ENCODE measurements at regions of chr2 and their contacts with region 1.

Region 1: GRCh38 chr2:162221064-162221463 is 22.2 kb downstream of the FAP start:
- DNase-seq: peak; percentile 74
- ATAC-seq: peak; percentile 75
- H3K4me3 Mint-ChIP-seq: no peak overlapping the region
- H3K27ac Mint-ChIP-seq: no peak overlapping the region
- H3K4me1 Mint-ChIP-seq: no peaks in the 10 kb centered on the region
- H3K27me3 Mint-ChIP-seq: peaks cover 47% of the 10 kb centered on the region

Region 2: GRCh38 chr2:162164802-162165201 is 56.3 kb before region 1 on chr2:
- CTCF ChIA-PET with region 1: interaction called, 16 read pairs
- DNase-seq: no peak
- ATAC-seq: no peak
- H3K4me3 Mint-ChIP-seq: no peak overlapping the region
- H3K27ac Mint-ChIP-seq: no peak overlapping the region
- H3K4me1 Mint-ChIP-seq: peaks cover 7% of the 10 kb centered on the region
- H3K27me3 Mint-ChIP-seq: peaks cover 33% of the 10 kb centered on the region

Region 3: GRCh38 chr2:162293122-162293786 is 72.2 kb after region 1 on chr2:
- CTCF ChIA-PET with region 1: interaction called, 125 read pairs
- DNase-seq: no peak
- ATAC-seq: no peak
- H3K4me3 Mint-ChIP-seq: no peak overlapping the region
- H3K27ac Mint-ChIP-seq: no peak overlapping the region
- H3K4me1 Mint-ChIP-seq: peaks cover 4% of the 10 kb centered on the region
- H3K27me3 Mint-ChIP-seq: no peaks in the 10 kb centered on the region

Region 4: GRCh38 chr2:162301151-162301804 is 80.2 kb after region 1 on chr2:
- CTCF ChIA-PET with region 1: interaction called, 125 read pairs
- DNase-seq: peak; percentile 63
- ATAC-seq: peak; percentile 81
- H3K4me3 Mint-ChIP-seq: no peak overlapping the region
- H3K27ac Mint-ChIP-seq: no peak overlapping the region
- H3K4me1 Mint-ChIP-seq: peaks cover 6% of the 10 kb centered on the region
- H3K27me3 Mint-ChIP-seq: no peaks in the 10 kb centered on the region

Region 5: GRCh38 chr2:162333968-162334367 is 112.9 kb after region 1 on chr2:
- CTCF ChIA-PET with region 1: interaction called, 15 read pairs
- DNase-seq: no peak
- ATAC-seq: peak; percentile 69
- H3K4me3 Mint-ChIP-seq: no peak overlapping the region
- H3K27ac Mint-ChIP-seq: no peak overlapping the region
- H3K4me1 Mint-ChIP-seq: peaks cover 3% of the 10 kb centered on the region
- H3K27me3 Mint-ChIP-seq: no peaks in the 10 kb centered on the region

Measured in activated CD8-positive, alpha-beta memory T cell treated with anti-CD3 and anti-CD28 coated beads, Interleukin-2, amount 10 ng/mL, durations not matched to agents 7 days and 5 days (primary cell).